GM18951 (cell line): ENCODE measurements at regions of chr11 and their contacts with region 1.

Region 1: DNA sequence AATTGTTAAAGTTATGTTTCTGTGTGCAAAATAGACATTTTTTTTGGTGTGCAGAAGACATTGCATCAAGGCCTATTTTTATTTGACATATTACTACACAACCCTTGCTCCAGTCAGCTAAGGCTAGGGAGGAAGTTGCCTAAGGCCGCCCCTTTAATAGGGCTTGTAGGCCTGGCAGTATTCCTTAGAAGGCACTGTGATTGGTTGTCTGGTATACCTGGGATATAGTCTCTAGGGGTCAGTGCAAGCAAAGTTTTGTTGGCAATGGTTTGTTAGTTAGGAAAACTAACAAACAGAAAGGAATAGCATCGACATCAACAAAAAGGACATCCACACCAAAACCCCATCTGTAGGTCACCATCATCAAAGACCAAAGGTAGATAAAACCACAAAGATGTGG is 16.9 kb downstream of the CCDC15 start:
- POLR2A ChIP-seq: no peak

Region 2: GRCh38 chr11:125141686-125142535 is 171.0 kb after region 1 on chr11:
- in situ Hi-C with region 1: loop called (anchors 10 kb)
- POLR2A ChIP-seq: no peak